OCI-LY7 (cell line): ENCODE measurements at regions of chr11 and their contacts with region 1.

Region 1: DNA sequence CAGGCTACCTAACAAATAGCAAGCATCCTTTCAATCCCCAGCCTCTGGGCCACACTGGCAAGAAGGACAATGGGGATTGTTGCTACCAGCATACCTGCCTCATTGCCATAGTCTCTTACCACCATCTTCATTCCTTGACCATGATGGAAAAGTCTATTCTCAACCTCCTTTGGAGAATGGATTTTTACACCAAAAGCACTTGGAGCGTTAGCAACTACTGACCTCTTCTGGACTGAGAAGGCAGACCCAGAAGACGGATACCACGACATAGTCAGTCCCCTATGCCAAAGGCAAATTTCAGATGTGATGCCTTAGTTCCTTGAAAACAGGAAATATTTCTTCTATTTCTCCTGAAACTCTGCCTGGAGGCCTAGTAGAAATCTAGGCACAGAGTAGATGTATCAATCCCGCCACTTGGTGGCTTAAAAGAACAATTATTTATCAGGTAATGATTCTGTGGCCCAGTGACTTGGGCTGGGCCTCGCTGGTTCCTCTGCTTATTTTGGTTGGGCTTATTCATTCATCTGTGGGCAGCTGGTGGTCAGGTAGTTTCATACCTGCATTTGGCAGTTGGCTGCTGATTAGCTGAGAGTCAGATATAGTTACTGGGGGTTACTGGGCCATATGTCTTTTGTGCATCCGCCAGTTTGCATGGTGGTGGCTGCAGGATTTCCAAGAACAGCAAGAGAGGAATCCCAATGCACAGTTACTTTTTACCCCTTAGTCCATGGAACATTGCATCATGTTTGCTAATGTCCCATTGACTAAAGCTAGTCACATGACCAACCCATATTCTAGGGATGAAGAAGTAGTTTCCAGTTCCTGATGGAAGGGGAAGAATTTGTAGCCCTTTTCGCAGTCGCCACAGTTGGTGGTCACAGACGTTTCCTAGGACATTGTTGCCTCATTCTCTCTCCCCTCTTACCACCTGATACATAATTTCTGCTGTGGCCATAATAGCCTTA is 75.2 kb downstream of the DHCR7 start:
- DNase-seq: peak; percentile 77
- H3K4me3 ChIP-seq: peak overlapping the region; percentile 58
- H3K27ac ChIP-seq: peak overlapping the region; percentile 98
- H3K4me1 ChIP-seq: peaks cover 59% of the 10 kb centered on the region
- CTCF ChIP-seq: peak; percentile 77

Region 2: GRCh38 chr11:71086675-71087258 is 286.2 kb before region 1 on chr11:
- CTCF ChIA-PET with region 1: no interaction called
- POLR2A ChIA-PET with region 1: no interaction called
- intact Hi-C with region 1: loop called (anchors 1 kb)
- DNase-seq: peak; percentile 56
- H3K4me3 ChIP-seq: no peak overlapping the region
- H3K27ac ChIP-seq: no peak overlapping the region
- H3K4me1 ChIP-seq: no peaks in the 10 kb centered on the region
- CTCF ChIP-seq: peak; percentile 75

Region 3: GRCh38 chr11:71120490-71120896 is 252.5 kb before region 1 on chr11:
- CTCF ChIA-PET with region 1: no interaction called
- POLR2A ChIA-PET with region 1: no interaction called
- intact Hi-C with region 1: loop called (anchors 2 kb)
- DNase-seq: peak; percentile 29
- H3K4me3 ChIP-seq: no peak overlapping the region
- H3K27ac ChIP-seq: no peak overlapping the region
- H3K4me1 ChIP-seq: no peaks in the 10 kb centered on the region
- CTCF ChIP-seq: peak; percentile 66

Region 4: DNA sequence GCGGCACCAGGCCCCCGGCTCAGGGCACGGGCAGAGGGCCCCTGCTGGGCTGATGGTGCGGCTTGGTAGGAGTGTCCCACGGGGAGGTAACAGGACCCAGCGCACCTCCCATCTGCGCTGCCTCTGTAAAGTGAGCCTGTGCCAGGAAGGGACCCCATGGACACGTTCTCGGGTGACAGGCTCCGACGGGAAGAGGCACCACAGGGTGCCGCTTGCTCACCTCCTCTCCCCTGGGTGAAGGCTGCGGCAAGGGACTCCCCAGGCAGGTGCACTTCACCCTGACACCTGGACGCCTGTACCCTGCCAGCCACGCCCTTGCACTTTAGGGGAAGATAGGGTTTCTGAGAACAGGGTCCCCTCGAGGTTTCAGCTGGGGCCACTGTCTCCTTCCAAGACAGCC is 168.7 kb before region 1 on chr11:
- CTCF ChIA-PET with region 1: interaction called, 3 read pairs
- POLR2A ChIA-PET with region 1: no interaction called
- intact Hi-C with region 1: loop called (anchors 5 kb)
- DNase-seq: peak; percentile 49
- H3K4me3 ChIP-seq: no peak overlapping the region
- H3K27ac ChIP-seq: no peak overlapping the region
- H3K4me1 ChIP-seq: peaks cover 40% of the 10 kb centered on the region
- CTCF ChIP-seq: no peak

Region 5: GRCh38 chr11:71311176-71311925 is 61.6 kb before region 1 on chr11:
- CTCF ChIA-PET with region 1: no interaction called
- POLR2A ChIA-PET with region 1: no interaction called
- intact Hi-C with region 1: no loop called
- DNase-seq: no peak
- H3K4me3 ChIP-seq: no peak overlapping the region
- H3K27ac ChIP-seq: no peak overlapping the region
- H3K4me1 ChIP-seq: no peaks in the 10 kb centered on the region
- CTCF ChIP-seq: no peak

Region 6: GRCh38 chr11:71383461-71383860 is 10.5 kb after region 1 on chr11:
- CTCF ChIA-PET with region 1: interaction called, 27 read pairs
- POLR2A ChIA-PET with region 1: interaction called, 12 read pairs
- intact Hi-C with region 1: loop called (anchors 1 kb)
- DNase-seq: peak; percentile 94
- H3K4me3 ChIP-seq: peak overlapping the region; percentile 40
- H3K27ac ChIP-seq: peak overlapping the region; percentile 92
- H3K4me1 ChIP-seq: peaks cover 60% of the 10 kb centered on the region
- CTCF ChIP-seq: no peak

Region 7: DNA sequence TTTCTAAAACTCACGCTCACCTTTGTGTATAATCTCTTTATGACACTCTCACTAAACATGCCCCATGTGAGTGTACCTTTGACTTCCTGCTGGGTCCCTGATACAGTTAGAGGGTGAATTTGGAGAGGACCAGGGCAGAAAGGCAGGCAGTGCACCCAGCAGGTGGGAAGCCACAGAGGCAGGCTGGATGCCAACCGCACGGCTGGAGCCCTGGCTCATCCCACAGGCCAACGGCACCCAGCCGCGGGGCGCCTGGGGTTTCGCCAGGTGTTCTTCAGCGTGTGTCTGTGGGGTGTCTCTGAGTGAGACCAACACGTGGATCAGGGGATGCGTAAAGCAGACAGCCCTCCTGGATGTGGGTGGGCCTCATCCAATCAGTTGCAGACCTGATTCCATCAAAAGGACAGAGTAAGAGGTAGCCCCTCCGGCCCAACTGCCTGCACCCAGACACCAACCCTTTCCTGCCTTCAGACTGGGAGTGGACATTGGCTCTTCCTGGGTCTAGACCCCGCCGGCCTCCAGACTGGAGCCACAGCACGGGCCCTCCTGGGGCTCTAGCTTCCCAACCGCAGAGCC is 23.7 kb after region 1 on chr11:
- CTCF ChIA-PET with region 1: interaction called, 6 read pairs
- POLR2A ChIA-PET with region 1: interaction called, 6 read pairs
- intact Hi-C with region 1: loop called (anchors 1 kb)
- DNase-seq: no peak
- H3K4me3 ChIP-seq: no peak overlapping the region
- H3K27ac ChIP-seq: no peak overlapping the region
- H3K4me1 ChIP-seq: peaks cover under 1% of the 10 kb centered on the region
- CTCF ChIP-seq: no peak

Region 8: DNA sequence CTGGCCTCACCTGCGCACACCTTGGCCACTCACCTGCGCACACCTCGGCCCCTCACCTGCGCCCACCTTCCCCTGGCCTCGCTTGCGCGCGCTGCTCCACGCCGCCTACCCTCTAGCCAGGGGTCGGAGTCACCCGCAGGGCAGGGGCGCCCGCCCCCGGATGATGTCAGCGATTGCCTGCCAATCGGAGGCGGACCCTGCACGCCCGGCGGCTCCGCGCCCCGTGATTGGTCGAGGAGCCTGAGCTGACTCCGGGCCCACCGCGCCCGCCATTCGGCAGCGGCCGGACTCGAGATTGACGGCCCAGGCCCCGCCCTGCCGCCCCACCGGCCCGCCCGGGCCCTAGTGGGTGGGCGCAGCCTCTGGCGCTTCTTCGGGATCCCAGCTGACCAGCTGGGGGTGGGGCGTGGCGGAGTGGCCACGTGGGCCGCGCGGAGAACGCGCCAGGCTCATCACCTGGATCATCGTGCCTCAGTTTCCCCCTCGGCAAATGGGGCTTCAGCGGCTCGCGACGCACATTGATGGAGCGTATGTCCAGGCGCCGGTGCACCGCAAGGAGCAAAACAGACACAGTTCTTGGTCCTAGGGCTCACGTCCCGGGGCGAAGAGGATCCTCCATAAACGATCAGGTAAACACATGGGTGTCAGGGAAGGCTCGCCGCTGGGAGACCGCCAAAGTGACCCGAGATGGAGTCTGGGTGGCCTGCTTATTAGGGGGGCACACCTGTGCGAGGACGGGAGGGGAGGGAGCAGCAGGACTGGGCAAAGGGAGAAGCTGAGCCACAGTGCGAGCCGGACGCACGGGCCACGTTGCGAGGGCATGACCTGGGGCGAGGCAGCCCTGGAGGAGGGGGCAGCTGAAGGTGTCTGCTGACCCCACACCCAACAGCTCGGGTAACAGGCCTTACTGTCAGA is 75.5 kb after region 1 on chr11 and contains the start of gene DHCR7:
- CTCF ChIA-PET with region 1: no interaction called
- POLR2A ChIA-PET with region 1: interaction called, 5 read pairs
- intact Hi-C with region 1: loop called (anchors 1 kb)
- DNase-seq: peak; percentile 97
- H3K4me3 ChIP-seq: peak within 1 kb of the TSS; percentile 91
- H3K27ac ChIP-seq: peak within 1 kb of the TSS; percentile 38
- H3K4me1 ChIP-seq: peaks cover 40% of the 10 kb centered on the region
- CTCF ChIP-seq: no peak
- total RNA-seq, gene DHCR7: 25.8 and 33.4 TPM in 2 replicates